RWPE1 (cell line): ENCODE measurements at regions of chr9 and their contacts with region 1.

Region 1: DNA sequence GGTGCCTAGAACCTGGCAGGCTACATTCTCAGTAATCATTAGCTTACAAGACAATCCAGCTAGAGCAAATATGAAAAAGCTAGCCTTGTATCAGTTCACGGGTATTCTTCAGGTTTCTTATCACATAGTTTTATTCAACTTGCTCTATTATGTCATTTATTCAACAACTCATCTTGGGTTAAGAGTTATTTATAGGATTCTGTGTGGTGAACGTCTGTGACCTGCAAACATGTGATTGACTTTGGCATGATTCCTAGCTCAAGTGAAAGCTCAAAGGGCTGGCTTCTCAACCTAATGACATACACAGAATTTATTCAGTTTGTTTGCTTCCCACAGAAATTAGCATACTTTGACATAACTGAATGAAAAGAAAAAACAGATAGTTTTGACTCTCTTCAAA is 173.1 kb downstream of the PLPPR1 start:
- DNase-seq: no peak
- H3K27ac ChIP-seq: no peak overlapping the region
- CTCF ChIP-seq: no peak

Region 2: DNA sequence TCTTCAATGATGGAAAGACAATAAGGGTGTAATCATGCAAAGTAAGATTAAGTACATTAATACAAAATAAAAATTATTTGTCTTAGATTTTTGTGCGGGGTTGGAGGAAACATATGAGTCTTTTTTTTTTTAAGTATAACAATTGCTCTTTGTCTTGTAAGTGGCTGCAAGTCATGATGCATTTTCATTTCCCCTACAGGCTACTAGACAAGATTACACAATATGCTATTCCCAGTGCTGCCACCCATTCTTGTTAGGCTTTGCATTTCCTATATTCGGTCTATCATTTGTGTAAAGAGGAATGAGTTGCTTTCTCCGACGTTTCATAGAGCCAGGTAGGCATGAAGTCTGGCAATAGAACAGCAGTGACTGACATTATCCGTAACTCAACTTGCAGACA is 1499.3 kb after region 1 on chr9:
- CTCF ChIA-PET with region 1: interaction called, 11 read pairs
- POLR2A ChIA-PET with region 1: no interaction called
- DNase-seq: peak; percentile 6
- H3K27ac ChIP-seq: no peak overlapping the region
- CTCF ChIP-seq: no peak